Esophagus squamous epithelium (tissue), 5 donors: ENCODE measurements at regions of chrX and their contacts with region 1.

Region 1: DNA sequence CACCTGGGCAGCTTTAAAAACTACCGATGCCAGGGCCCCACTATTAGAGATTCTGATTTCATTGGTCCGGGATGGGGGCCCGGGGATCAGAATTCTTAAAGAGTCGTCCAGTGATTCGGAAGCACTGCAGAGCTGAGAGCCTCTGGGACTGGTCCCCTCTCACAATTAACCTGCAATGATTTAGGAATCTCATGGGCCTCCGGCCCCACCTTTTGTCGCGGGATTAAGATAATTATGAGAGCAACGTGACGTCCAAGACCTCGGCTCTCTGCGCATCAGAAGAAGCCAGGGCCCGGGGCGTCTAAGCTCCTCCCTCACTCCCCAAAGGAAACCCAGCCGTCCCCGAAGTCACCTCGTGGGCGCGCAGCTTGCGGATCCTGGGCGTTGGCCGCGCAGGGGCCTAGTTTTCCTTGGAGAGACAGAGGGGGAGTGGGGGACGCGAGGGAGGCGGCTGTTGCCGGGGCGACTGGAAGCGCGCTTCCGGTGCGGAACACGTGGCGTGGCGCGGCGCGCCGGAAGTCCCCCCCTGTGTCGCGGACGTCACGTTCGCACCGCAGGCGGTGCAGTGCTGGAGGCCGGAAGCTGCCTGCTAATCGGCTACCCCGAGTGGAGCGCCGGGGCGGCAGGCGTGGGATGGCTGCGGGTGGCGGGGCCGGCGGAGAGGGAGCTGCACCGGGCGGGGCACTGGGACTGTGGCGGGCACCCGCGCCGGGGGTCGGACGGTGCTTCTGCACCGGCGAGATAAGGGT is at the start of gene GEMIN8:
- DNase-seq: peak; percentile 32
- H3K4me3 ChIP-seq: peak within 1 kb of the TSS; percentile 56 to 77 (median 68)
- H3K27ac ChIP-seq: peak within 1 kb of the TSS; percentile 78 to 91 (median 86)
- H3K4me1 ChIP-seq: peaks cover 0 to 44% (median 3%) of the 10 kb centered on the region in 3 donors
- H3K27me3 ChIP-seq: no peaks in the 10 kb centered on the region
- CTCF ChIP-seq: no peak
- POLR2A ChIP-seq: peak in 2 of 4 donors; percentile 72 to 74
- total RNA-seq, gene GEMIN8: 12.2 to 20.8 (median 15.7) TPM

Region 2: GRCh38 chrX:13506574-13506973 is 523.0 kb before region 1 on chrX:
- intact Hi-C with region 1: loop called (anchors 5 kb)
- DNase-seq: no peak
- H3K4me3 ChIP-seq: no peak overlapping the region
- H3K27ac ChIP-seq: no peak overlapping the region
- H3K4me1 ChIP-seq: no peaks in the 10 kb centered on the region
- H3K27me3 ChIP-seq: no peaks in the 10 kb centered on the region
- CTCF ChIP-seq: peak; percentile 33 to 81 (median 70)
- POLR2A ChIP-seq: no peak

Region 3: GRCh38 chrX:13581554-13581953 is 448.0 kb before region 1 on chrX:
- intact Hi-C with region 1: no loop called
- DNase-seq: no peak
- H3K4me3 ChIP-seq: no peak overlapping the region
- H3K27ac ChIP-seq: no peak overlapping the region
- H3K4me1 ChIP-seq: no peaks in the 10 kb centered on the region
- H3K27me3 ChIP-seq: no peaks in the 10 kb centered on the region
- CTCF ChIP-seq: no peak
- POLR2A ChIP-seq: no peak

Region 4: GRCh38 chrX:13658602-13659001 is 371.0 kb before region 1 on chrX:
- intact Hi-C with region 1: loop called (anchors 5 kb)
- DNase-seq: no peak
- H3K4me3 ChIP-seq: no peak overlapping the region
- H3K27ac ChIP-seq: peak overlapping the region in 3 of 4 donors; percentile 7 to 55 (median 11)
- H3K4me1 ChIP-seq: peaks cover 0 to 14% (median 0%) of the 10 kb centered on the region in 3 donors
- H3K27me3 ChIP-seq: no peaks in the 10 kb centered on the region
- CTCF ChIP-seq: peak; percentile 59 to 79 (median 70)
- POLR2A ChIP-seq: no peak

Region 5: GRCh38 chrX:13750204-13750603 is 279.4 kb before region 1 on chrX:
- intact Hi-C with region 1: loop called (anchors 10 kb)
- DNase-seq: no peak
- H3K4me3 ChIP-seq: no peak overlapping the region
- H3K27ac ChIP-seq: no peak overlapping the region
- H3K4me1 ChIP-seq: no peaks in the 10 kb centered on the region
- H3K27me3 ChIP-seq: no peaks in the 10 kb centered on the region
- CTCF ChIP-seq: peak; percentile 45 to 65 (median 60)
- POLR2A ChIP-seq: no peak

Region 6: DNA sequence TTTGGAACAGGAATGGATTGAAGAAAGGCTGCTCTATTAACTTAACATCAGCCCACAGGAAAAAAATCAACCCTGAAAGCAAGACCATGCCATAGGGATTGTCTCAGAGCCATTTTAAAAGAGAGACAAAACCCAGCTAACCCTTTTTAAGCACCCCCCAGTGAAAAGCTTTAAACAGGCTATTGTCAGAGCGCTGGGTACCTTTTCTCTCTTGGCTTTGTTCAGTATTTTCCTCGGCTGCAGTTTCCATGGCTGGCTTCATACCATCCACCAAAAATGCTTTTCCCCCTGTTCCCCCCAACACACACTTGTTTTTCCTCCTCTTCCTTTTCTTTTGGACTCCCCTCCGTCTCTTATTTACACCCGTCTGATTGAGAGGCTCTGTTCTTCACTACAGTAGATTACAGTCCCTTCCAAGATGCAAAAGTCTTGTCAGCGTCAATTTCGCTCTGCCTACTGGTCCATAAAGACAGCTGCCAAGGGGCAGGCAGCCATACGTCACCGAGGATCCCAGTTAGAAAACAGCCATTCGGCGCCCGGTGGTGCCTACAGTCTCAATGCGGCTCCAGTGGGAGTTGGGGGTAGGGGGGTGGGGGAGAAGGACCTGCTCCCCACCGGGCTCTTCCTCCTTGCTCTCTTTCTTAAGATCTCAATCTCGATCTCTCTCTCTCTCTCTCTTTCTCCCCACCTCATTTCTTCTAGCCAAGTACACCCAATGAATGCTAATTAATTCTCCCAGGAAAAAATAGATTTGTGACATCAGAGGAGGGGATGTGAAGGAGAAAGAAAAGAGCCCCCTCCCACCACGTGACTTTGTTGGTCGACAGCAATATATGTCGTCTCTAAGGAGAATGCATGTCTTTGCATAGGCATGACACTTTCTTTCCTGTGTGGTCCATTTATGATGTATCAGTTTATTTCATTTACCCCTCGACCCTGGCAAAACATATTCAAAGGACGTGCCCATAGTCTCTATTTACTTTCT is 212.7 kb before region 1 on chrX and contains the start of gene GPM6B:
- intact Hi-C with region 1: no loop called
- DNase-seq: no peak
- H3K4me3 ChIP-seq: no peak within 1 kb of the TSS
- H3K27ac ChIP-seq: no peak within 1 kb of the TSS
- H3K4me1 ChIP-seq: no peaks in the 10 kb centered on the region
- H3K27me3 ChIP-seq: peaks cover 0 to 3% (median 1%) of the 10 kb centered on the region in 4 donors
- CTCF ChIP-seq: no peak
- POLR2A ChIP-seq: no peak
- total RNA-seq, gene GPM6B: 2.4 to 7.4 (median 5.3) TPM

Region 7: DNA sequence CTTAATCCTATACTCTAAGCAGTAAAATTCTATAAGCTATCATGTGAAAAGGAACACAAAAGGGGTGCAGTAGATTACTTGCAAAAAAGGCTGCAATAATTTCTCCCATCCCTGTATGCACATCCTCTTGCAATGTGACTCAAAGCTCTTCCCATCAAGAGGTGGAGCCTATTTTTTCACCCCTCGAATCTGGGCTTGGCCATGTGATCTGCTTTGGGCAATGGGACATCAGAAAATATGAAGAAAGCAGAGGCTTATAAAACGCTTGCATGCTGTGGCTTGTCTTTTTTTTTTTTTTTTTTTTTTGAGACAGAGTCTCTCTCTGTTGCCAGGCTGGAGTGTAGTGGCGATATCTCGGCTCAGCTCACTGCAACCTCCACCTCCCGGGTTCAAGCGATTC is 32.9 kb before region 1 on chrX:
- intact Hi-C with region 1: no loop called
- DNase-seq: no peak
- H3K4me3 ChIP-seq: no peak overlapping the region
- H3K27ac ChIP-seq: no peak overlapping the region
- H3K4me1 ChIP-seq: no peaks in the 10 kb centered on the region
- H3K27me3 ChIP-seq: no peaks in the 10 kb centered on the region
- CTCF ChIP-seq: no peak
- POLR2A ChIP-seq: no peak

Region 8: GRCh38 chrX:14056206-14056605 is 26.6 kb after region 1 on chrX:
- intact Hi-C with region 1: no loop called
- DNase-seq: no peak
- H3K4me3 ChIP-seq: no peak overlapping the region
- H3K27ac ChIP-seq: no peak overlapping the region
- H3K4me1 ChIP-seq: no peaks in the 10 kb centered on the region
- H3K27me3 ChIP-seq: no peaks in the 10 kb centered on the region
- CTCF ChIP-seq: no peak
- POLR2A ChIP-seq: no peak